Mucosa of descending colon (tissue), 3 donors: ENCODE measurements at regions of chr10 and their contacts with region 1.

Region 1: DNA sequence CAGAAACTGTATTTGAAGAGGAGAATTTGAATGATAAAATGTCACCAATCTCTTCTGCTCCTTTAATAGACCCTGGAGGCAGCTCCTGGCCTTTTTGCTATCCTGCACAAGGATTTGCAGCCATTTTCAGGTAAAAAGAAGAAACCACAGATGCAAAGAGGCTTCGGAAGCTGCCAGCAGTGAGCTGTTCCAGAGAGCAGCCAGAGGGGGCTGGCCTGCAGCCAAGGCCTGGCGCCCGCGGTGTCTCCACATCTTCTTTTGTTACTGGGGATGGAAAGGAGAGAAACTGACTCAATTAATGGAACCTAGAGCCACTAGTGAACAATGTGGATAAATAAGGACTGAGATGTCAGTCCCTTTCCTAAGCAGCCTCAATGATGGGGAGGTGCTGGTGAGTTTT is 23.9 kb upstream of the GPR26 start:
- DNase-seq: no peak
- ATAC-seq: no peak
- H3K4me3 ChIP-seq: no peak overlapping the region
- H3K4me1 ChIP-seq: no peaks in the 10 kb centered on the region
- CTCF ChIP-seq: no peak

Region 2: GRCh38 chr10:123967396-123968243 is 325.3 kb after region 1 on chr10:
- intact Hi-C with region 1: loop called in 1 of 2 experiments (anchors 5 kb)
- DNase-seq: peak in 2 of 3 donors; percentile 79 to 81
- ATAC-seq: peak; percentile 82
- H3K4me3 ChIP-seq: no peak overlapping the region
- H3K4me1 ChIP-seq: no peaks in the 10 kb centered on the region
- CTCF ChIP-seq: peak; percentile 59